Upper lobe of right lung (tissue), 1 donor: ENCODE measurements at regions of chr6 and their contacts with region 1.

Region 1: DNA sequence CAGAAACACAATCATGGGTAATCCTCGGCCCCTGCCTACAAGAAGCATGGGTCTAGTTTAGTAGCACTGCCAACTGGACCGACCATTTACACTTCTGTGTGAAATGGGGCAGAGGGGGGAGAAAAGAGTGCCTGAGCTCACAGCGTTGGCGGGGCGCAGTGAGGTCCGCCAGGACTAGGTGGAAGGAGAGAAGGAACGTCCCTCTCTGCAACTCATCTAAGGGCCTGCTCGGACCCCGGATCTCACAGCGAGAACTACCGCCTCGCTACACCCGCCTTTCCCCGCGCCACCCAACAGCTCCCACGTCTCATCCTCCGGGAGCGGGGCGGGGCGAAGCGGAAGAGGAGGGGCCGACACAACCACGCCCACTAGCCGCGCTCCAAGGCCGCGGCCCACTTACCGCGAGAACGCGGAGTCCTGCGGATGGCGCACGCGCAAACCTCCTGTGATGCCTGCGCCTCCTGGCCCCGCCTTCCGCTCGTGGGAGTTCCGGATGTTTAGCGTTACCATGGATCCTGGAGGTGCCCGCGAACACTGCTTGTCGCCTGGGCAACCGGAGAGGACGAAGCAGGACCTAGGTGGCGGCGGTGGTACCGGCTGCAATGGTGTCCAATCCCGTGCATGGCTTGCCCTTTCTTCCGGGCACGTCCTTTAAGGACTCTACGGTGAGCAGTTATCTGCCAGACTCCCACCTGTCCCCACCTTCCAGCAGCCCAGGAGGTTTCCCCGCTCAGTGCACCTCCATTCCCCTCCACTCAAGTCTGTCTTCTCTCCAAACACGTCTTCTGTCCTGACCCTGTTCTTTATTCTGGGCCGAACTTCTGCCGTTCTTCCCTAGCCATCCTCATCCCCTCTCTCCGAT is at the start of gene EFHC1:
- DNase-seq: peak; percentile 99
- ATAC-seq: peak; percentile 99
- H3K4me3 ChIP-seq: peak within 1 kb of the TSS; percentile 81
- H3K27ac ChIP-seq: peak within 1 kb of the TSS; percentile 90
- H3K4me1 ChIP-seq: peaks cover 10% of the 10 kb centered on the region
- H3K27me3 ChIP-seq: no peaks in the 10 kb centered on the region
- CTCF ChIP-seq: no peak
- total RNA-seq, gene EFHC1: 16.8 TPM

Region 2: GRCh38 chr6:52598123-52598823 is 178.2 kb after region 1 on chr6:
- intact Hi-C with region 1: loop called (anchors 10 kb)
- DNase-seq: no peak
- ATAC-seq: peak; percentile 79
- H3K4me3 ChIP-seq: no peak overlapping the region
- H3K27ac ChIP-seq: no peak overlapping the region
- H3K4me1 ChIP-seq: peaks cover 15% of the 10 kb centered on the region
- H3K27me3 ChIP-seq: no peaks in the 10 kb centered on the region
- CTCF ChIP-seq: peak; percentile 67

Region 3: DNA sequence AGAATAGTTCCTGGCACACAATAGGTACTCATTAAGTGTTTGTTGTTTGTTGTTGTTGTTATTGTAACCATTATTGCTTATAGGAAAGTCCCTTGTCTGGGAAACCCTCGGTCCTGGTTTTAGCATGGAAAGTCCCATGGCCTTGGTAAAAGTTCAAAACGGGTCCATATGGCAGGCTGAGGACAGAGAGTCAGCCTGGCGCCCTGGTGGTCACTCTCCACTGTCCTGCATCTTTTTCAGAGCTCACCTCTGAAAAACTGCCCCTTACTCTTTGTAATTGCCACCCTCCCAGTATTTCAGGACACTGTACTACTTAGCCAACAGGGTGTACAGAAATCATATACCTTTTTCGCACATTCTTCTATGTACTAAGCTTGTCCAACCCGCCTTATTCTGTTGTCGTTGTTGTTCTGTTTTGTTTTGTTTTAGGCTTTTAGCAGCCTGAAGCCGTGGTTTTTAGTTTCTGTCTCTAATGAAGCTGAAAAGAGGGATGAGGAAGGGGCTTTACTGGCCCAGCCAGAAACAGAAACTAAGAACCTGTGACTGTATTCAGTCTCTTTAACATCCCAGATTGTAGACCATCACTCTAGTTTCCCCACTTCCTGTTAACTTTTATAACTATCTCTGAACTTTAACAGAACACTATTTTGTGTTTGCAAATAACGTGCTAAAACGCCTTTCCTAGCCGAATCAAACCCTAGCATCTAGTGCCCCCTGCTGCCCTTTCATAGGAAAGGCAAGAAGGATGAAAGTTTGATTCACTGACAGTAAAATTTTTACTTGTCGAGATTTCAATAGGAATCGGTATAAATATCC is 243.3 kb after region 1 on chr6:
- intact Hi-C with region 1: loop called (anchors 2 kb)
- DNase-seq: no peak
- ATAC-seq: peak; percentile 74
- H3K4me3 ChIP-seq: peak overlapping the region; percentile 78
- H3K27ac ChIP-seq: peak overlapping the region; percentile 61
- H3K4me1 ChIP-seq: peaks cover 11% of the 10 kb centered on the region
- H3K27me3 ChIP-seq: no peaks in the 10 kb centered on the region
- CTCF ChIP-seq: peak; percentile 92